ENCODE measurements at regions of chr12 and their contacts with region 1.

Region 1: DNA sequence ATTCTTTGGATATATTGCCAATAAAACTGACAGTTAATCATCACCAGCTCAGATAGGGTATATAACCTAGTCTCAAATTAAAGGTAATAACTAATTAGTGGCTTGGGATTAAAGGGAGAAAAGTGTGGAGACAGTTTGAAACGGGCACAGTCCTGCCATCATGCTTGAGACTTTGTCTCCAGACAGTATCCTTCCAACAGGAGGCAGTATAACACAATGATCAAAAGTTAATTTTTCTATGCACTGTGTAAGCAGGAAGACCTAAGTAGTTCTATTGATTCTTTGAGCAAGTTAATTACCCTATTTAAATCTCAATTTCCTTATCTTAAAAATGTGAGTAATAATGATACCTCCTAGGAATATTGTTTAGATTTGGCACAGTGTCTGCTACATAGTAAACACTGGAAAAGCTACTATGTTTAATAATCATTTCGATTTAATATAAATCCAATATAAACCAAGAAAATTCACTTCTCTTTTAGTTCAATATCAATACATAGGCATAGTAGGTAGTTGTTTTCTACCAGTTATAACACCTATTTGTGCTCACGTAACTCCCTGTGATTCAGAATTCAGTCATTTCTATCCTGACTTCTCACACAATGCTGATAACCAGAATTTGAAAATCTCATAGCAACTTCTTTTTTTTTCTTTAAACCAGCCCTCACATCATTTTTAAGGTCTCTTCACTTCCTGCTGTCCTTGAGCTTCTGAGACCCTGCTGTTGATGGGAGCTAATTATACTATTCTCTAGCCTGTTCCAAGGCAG is 53.7 kb downstream of the GALNT4 start:
- H3K4me3 ChIP-seq: no peak overlapping the region
- H3K27ac ChIP-seq: no peak overlapping the region
- H3K4me1 ChIP-seq: peaks cover 2% of the 10 kb centered on the region
- CTCF ChIP-seq: no peak

Region 2: GRCh38 chr12:89493670-89494302 is 22.9 kb after region 1 on chr12:
- CTCF ChIA-PET with region 1: interaction called, 10 read pairs
- POLR2A ChIA-PET with region 1: no interaction called
- H3K4me3 ChIP-seq: no peak overlapping the region
- H3K27ac ChIP-seq: no peak overlapping the region
- H3K4me1 ChIP-seq: no peaks in the 10 kb centered on the region
- CTCF ChIP-seq: no peak

Region 3: DNA sequence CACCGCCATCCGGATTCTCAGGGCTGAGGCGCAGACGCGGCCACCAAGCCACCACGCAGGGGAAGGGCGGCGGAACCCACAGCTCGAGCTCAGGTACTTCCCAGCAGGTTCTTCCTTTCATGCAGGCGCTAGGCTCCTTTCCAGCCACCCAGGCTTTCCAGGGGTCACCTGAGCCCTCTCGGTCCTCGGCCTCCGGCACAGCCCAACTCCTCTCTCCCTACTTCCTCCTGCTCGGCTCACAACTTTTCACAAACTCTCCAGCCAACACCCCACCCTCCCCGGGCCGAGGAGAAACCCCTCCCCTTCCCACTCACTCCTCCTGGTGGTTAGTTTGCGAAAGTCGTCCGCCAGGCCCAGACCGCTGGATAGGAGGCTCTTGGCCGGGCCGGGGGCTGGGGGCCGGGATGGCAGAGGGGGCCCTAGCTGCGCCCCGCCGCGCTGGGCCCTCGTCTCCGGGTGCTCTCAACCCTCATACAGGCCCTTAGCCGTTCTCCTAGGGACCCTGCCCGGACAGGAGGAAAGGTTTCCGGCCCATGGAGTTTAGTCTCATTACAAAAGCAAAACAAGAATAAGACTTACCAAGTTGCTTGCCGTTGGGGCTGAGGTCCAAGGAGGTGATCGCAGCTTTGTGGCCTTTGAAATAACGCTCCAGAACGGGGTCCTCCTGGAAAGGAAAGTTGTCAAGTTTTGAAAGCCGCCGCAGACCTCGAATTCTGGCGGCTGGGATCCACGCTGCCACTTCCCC is 53.8 kb after region 1 on chr12 and contains the start of gene GALNT4:
- CTCF ChIA-PET with region 1: interaction called, 14 read pairs
- POLR2A ChIA-PET with region 1: no interaction called
- H3K4me3 ChIP-seq: peak within 1 kb of the TSS; percentile 87
- H3K27ac ChIP-seq: peak within 1 kb of the TSS; percentile 78
- H3K4me1 ChIP-seq: no peaks in the 10 kb centered on the region
- CTCF ChIP-seq: peak; percentile 77

Measured in HEK293 (cell line).